ENCODE measurements at regions of chr1 and their contacts with region 1.

Region 1: GRCh38 chr1:172532700-172533509 is at the start of gene SUCO:
- DNase-seq: peak; percentile 100
- H3K4me3 Mint-ChIP-seq: peak within 1 kb of the TSS; percentile 90
- H3K27ac Mint-ChIP-seq: peak within 1 kb of the TSS; percentile 98
- H3K4me1 Mint-ChIP-seq: peaks cover 38% of the 10 kb centered on the region
- H3K27me3 Mint-ChIP-seq: no peaks in the 10 kb centered on the region
- CTCF ChIP-seq: no peak
- total RNA-seq, gene SUCO: 47.9 and 54.3 TPM in 2 replicates

Region 2: GRCh38 chr1:171741872-171742576 is 790.9 kb before region 1 on chr1 and contains the start of gene VAMP4:
- CTCF ChIA-PET with region 1: no interaction called
- POLR2A ChIA-PET with region 1: interaction called, 8 read pairs
- intact Hi-C with region 1: loop called (anchors 5 kb)
- DNase-seq: peak; percentile 89
- H3K4me3 Mint-ChIP-seq: peak within 1 kb of the TSS; percentile 87
- H3K27ac Mint-ChIP-seq: peak within 1 kb of the TSS; percentile 98
- H3K4me1 Mint-ChIP-seq: peaks cover 45% of the 10 kb centered on the region
- H3K27me3 Mint-ChIP-seq: no peaks in the 10 kb centered on the region
- CTCF ChIP-seq: no peak
- total RNA-seq, gene VAMP4: 20.2 and 21.1 TPM in 2 replicates

Region 3: DNA sequence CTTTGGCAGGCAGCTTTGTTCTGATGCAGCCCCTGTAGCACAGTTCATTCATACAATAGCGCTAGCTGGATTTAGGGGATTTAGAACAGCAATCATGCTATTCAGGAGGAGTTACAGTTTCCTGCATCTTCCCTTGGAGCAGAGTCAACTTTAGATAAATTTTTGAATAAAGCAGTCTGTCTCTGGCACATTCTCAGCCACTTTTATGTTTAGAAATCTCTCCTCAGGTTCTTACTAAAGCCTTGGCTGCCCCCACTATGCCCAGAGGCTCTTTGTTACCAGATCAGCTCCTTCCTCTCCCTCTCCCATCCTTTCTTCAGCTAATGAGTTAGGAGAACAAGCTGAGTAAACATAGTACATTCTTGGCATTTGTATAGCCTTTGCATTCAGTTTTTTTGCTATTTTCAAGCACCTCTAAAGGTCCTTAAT is 72.0 kb before region 1 on chr1:
- CTCF ChIA-PET with region 1: no interaction called
- POLR2A ChIA-PET with region 1: interaction called, 13 read pairs
- intact Hi-C with region 1: no loop called
- DNase-seq: no peak
- H3K4me3 Mint-ChIP-seq: no peak overlapping the region
- H3K27ac Mint-ChIP-seq: no peak overlapping the region
- H3K4me1 Mint-ChIP-seq: peaks cover 12% of the 10 kb centered on the region
- H3K27me3 Mint-ChIP-seq: no peaks in the 10 kb centered on the region
- CTCF ChIP-seq: no peak

Region 4: GRCh38 chr1:172545396-172546004 is 12.6 kb after region 1 on chr1:
- CTCF ChIA-PET with region 1: interaction called, 5 read pairs
- POLR2A ChIA-PET with region 1: interaction called, 74 read pairs
- intact Hi-C with region 1: no loop called
- DNase-seq: no peak
- H3K4me3 Mint-ChIP-seq: no peak overlapping the region
- H3K27ac Mint-ChIP-seq: no peak overlapping the region
- H3K4me1 Mint-ChIP-seq: peaks cover 23% of the 10 kb centered on the region
- H3K27me3 Mint-ChIP-seq: no peaks in the 10 kb centered on the region
- CTCF ChIP-seq: no peak

Region 5: DNA sequence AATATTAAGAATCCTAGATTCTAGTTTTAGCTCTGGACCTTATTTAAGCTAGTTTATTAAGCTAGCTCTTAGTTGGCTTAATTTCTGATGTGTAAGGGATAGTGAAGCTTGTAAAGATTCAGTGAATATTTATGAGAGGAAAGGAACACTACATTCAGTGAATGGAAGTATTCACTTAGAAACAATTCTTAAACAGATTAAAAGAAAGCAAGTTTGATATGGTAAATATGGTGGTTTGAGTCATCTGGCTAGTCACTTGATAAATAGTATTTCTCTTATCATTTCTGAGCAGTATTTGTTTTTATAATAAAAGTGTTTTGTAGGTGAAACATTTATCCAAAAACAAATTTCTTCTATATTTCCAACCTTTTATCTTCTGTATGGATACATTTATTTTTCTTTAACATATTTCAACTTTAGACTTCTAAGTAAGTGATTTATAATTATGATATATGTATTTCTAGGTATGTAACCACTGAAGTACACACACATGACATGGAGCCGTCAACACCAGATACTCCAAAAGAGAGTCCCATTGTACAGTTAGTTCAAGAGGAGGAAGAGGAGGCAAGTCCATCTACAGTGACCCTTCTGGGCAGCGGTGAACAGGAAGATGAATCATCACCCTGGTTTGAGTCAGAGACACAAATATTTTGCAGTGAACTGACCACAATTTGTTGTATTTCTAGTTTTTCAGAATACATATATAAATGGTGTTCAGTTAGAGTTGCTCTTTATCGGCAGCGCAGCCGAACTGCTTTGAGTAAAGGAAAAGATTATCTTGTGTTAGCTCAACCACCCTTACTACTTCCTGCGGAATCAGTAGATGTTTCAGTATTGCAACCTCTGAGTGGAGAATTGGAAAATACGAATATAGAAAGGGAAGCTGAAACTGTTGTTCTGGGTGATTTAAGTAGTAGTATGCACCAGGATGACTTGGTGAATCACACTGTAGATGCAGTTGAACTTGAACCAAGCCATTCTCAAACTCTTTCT is 55.7 kb after region 1 on chr1:
- CTCF ChIA-PET with region 1: no interaction called
- POLR2A ChIA-PET with region 1: interaction called, 25 read pairs
- intact Hi-C with region 1: loop called (anchors 2 kb)
- DNase-seq: peak; percentile 84
- H3K4me3 Mint-ChIP-seq: peak overlapping the region; percentile 50
- H3K27ac Mint-ChIP-seq: peak overlapping the region; percentile 88
- H3K4me1 Mint-ChIP-seq: peaks cover 40% of the 10 kb centered on the region
- H3K27me3 Mint-ChIP-seq: no peaks in the 10 kb centered on the region
- CTCF ChIP-seq: no peak

Measured in MCF 10A (cell line).